ENCODE measurements at regions of chr16 and their contacts with region 1.

Region 1: GRCh38 chr16:8087597-8088289 is 502.6 kb downstream of the TMEM114 start:
- DNase-seq: no peak
- CTCF ChIP-seq: no peak

Region 2: GRCh38 chr16:7990626-7991260 is 97.0 kb before region 1 on chr16:
- in situ Hi-C with region 1: loop called (anchors 25 kb)
- DNase-seq: no peak
- CTCF ChIP-seq: no peak